Activated CD8-positive, alpha-beta memory T cell treated with anti-CD3 and anti-CD28 coated beads, Interleukin-2, amount 10 ng/mL, durations not matched to agents 7 days and 5 days (primary cell): ENCODE measurements at regions of chr11 and their contacts with region 1.

Region 1: DNA sequence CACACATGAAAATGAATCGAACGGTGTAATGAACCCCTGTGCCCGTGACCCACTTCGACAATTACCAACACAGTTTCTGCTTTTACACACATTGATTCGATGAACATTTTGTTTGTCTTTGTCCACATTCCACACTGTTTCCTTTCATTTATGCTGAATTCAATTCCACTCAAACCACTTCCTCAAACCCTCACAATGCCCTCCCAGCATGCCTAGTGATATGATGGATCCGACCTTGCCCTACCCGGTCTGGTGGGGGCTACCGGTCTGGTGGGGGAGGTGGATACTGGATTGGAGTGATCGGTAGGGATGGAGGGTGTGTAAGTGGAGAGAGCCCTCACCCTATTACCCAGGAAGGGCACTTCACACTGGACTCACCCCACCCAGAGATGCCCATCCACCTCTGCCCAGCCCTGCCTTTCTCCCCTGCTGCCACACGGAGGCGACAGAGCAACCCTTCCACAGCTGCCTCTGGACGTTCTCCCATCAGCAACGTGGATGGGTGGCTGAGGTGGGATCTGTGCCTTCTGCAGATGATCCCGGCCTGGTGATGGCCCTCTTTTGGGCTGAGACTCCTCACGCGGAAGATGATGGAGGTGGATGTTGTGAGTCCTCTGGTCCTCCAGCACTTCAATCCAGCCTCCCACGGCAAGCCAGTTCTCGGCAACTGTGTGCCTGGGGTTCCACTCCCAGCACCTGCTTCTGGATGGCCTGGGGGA is 33.0 kb upstream of the P2RY2 start:
- DNase-seq: peak; percentile 70
- ATAC-seq: peak; percentile 82
- H3K4me3 Mint-ChIP-seq: peak overlapping the region; percentile 4
- H3K27ac Mint-ChIP-seq: no peak overlapping the region
- H3K4me1 Mint-ChIP-seq: peaks cover 6% of the 10 kb centered on the region
- H3K27me3 Mint-ChIP-seq: peaks cover 28% of the 10 kb centered on the region

Region 2: DNA sequence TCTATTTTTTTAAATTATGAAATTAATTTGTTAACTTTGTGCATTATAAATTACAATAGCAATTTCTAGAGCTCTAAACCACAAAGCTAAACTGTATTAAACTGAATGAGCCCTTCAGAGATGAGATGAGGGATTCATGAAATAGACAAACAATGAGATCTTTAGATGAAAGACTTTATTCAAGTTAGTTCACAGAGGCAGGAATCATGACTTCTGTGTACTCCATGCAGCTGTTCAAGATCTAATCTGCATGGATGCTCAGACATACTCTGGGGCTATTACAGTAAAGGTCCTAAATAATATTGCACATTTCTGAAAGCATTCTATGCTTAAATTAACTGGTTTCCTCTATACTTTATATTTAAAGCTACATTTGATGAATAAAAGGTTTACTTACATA is 165.7 kb before region 1 on chr11:
- CTCF ChIA-PET with region 1: no interaction called
- DNase-seq: no peak
- ATAC-seq: no peak
- H3K4me3 Mint-ChIP-seq: no peak overlapping the region
- H3K27ac Mint-ChIP-seq: no peak overlapping the region
- H3K4me1 Mint-ChIP-seq: peaks cover 4% of the 10 kb centered on the region
- H3K27me3 Mint-ChIP-seq: no peaks in the 10 kb centered on the region

Region 3: DNA sequence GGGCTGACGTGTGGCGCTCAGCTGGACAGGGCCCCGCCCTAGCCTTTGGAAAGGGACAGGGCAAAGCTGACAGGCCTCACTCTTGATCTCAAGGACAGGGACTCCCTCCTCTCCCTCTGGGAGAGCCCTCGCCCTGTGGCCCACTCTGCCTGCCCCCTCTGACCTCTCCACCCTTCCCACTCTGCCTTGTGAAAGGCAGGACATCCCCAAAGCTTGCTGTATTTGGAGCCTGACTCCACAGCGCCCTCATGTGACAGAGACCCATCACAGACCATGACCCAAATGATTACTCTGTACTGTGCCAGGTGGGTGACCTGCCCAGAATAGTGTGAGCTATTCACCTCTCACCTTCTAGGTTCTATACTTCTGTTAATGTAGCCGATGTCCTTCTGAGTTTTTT is 51.7 kb after region 1 on chr11:
- CTCF ChIA-PET with region 1: interaction called, 15 read pairs
- DNase-seq: peak; percentile 54
- ATAC-seq: peak; percentile 57
- H3K4me3 Mint-ChIP-seq: no peak overlapping the region
- H3K27ac Mint-ChIP-seq: no peak overlapping the region
- H3K4me1 Mint-ChIP-seq: no peaks in the 10 kb centered on the region
- H3K27me3 Mint-ChIP-seq: peaks cover 3% of the 10 kb centered on the region

Region 4: GRCh38 chr11:73288873-73289707 is 104.0 kb after region 1 on chr11:
- CTCF ChIA-PET with region 1: interaction called, 60 read pairs
- DNase-seq: peak; percentile 68
- ATAC-seq: peak; percentile 77
- H3K4me3 Mint-ChIP-seq: no peak overlapping the region
- H3K27ac Mint-ChIP-seq: no peak overlapping the region
- H3K4me1 Mint-ChIP-seq: peaks cover 29% of the 10 kb centered on the region
- H3K27me3 Mint-ChIP-seq: peaks cover 4% of the 10 kb centered on the region